Caco-2 (cell line): ENCODE measurements at regions of chr1 and their contacts with region 1.

Region 1: GRCh38 chr1:234499119-234499942 is 20.4 kb upstream of the TARBP1 start:
- DNase-seq: peak; percentile 81 to 91
- H3K4me3 ChIP-seq: no peak overlapping the region
- H3K4me3 Mint-ChIP-seq: no peak overlapping the region
- H3K27ac Mint-ChIP-seq: peak overlapping the region; percentile 96
- H3K4me1 ChIP-seq: peaks cover 11% of the 10 kb centered on the region
- H3K4me1 Mint-ChIP-seq: peaks cover 18% of the 10 kb centered on the region
- H3K27me3 ChIP-seq: no peaks in the 10 kb centered on the region
- H3K27me3 Mint-ChIP-seq: no peaks in the 10 kb centered on the region
- CTCF ChIP-seq: peak; percentile 96

Region 2: DNA sequence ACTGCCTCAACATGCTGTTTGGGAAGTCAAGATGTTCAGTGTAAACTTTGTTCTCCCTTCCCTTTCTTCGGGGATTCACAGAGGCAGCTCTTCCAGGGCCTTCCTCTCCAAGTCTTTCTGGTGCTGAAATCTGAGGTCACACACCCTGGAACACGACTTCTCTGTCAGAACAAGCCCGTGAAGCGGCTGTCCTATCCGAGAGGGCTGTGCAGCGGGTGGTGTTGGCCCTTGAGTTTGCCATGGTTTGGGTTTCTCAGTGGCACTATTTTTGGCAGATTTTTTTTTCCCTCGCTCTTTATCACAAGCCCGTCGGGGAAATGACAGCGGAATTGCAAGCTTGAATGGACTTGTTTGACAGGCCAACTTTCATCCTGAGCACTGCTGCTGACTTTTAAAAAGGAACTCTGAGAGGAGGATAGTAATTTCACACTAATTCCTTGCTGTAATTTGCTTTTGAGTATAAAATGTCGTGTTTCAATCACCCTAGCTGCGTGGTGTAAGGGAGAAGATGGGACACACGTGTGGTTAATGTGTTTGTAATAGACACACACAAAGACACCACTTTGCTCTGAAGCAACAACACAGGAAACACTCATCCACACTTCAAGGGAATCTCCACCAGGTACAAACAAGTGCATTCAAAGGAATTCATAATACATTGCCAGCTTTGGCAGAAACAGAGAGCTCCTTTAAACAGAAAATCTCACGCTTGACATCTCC is 39.8 kb after region 1 on chr1:
- CTCF ChIA-PET with region 1: interaction called, 16 read pairs
- POLR2A ChIA-PET with region 1: interaction called, 4 read pairs
- intact Hi-C with region 1: loop called (anchors 1 kb)
- DNase-seq: no peak
- H3K4me3 ChIP-seq: no peak overlapping the region
- H3K4me3 Mint-ChIP-seq: no peak overlapping the region
- H3K27ac Mint-ChIP-seq: peak overlapping the region; percentile 83
- H3K4me1 ChIP-seq: peaks cover 55% of the 10 kb centered on the region
- H3K4me1 Mint-ChIP-seq: peaks cover 36% of the 10 kb centered on the region
- H3K27me3 ChIP-seq: no peaks in the 10 kb centered on the region
- H3K27me3 Mint-ChIP-seq: no peaks in the 10 kb centered on the region
- CTCF ChIP-seq: no peak

Region 3: DNA sequence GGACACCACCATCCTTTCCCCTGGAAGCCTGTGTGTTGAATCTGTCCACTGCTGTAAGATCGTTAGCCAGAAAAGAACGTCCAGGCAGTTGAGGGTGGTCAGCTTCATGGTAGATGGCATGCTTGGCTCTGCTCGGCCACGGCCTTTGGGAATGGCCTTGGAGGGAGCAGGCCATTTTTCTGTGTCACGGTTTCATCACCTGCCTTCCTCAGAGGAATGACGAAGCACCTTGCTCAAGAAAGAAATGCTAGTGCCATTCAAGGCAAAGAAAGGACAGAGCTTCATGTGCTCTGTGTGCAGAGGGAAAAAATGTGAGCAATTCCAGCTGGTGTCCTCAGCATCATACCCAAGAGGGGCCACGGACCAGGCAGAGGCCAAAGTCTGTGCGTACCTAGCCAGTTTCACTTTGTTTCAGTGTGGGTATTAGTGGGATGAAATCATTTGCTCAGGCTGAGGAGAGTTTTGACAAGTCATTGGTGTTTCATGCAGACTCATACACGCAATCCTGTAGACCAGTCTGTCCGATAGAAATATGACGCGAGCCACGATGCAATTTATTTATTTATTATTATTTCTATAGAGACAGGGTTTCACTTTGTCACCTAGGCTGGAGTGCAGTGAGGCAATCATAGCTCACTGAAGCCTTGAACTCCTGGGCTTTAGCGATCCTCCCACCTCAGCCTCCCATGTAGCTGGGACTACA is 46.7 kb after region 1 on chr1:
- CTCF ChIA-PET with region 1: interaction called, 5 read pairs
- POLR2A ChIA-PET with region 1: no interaction called
- intact Hi-C with region 1: loop called (anchors 1 kb)
- DNase-seq: peak; percentile 88 to 90
- H3K4me3 ChIP-seq: no peak overlapping the region
- H3K4me3 Mint-ChIP-seq: no peak overlapping the region
- H3K27ac Mint-ChIP-seq: peak overlapping the region; percentile 48
- H3K4me1 ChIP-seq: peaks cover 39% of the 10 kb centered on the region
- H3K4me1 Mint-ChIP-seq: peaks cover 32% of the 10 kb centered on the region
- H3K27me3 ChIP-seq: no peaks in the 10 kb centered on the region
- H3K27me3 Mint-ChIP-seq: no peaks in the 10 kb centered on the region
- CTCF ChIP-seq: no peak

Region 4: DNA sequence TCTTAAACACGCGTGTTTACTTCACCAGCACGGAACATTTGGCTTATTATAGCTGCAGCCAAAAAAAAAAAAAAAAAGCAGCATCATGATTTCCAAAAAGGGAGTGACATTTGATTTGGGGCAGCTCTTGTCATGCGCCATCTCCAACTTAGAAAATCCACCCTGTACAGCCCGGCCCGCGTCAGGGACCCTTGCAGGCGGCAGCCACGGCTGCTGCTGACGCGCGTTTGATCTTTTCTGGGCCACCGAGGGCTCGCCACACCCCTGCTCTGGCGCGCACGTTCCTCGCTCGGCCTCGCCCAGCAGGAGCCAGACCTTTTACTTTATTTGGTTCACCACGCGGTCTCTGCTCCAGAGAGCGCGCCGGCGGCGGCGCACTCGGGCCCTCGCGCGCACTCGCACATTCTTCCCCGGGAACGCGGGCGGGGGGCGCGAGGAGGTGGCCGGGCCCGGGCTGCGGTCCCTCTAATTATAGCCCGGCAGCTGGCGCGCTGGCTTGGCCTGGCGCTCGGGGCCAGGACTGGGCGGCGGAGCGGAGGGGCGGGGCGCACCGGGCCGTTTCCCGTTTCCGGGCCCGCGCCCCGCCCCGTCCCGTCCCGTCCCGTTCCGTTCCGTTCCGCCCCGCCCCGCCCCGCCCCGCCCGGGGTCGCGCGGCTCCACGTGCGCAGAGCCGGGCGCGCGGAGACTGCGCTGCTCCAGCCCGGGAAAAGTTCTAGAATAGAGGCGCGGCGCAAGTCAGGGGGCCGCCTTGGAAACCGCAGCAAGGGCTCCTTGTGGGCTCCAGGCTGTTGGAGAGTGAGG is 100.5 kb after region 1 on chr1:
- CTCF ChIA-PET with region 1: interaction called, 15 read pairs
- POLR2A ChIA-PET with region 1: interaction called, 6 read pairs
- intact Hi-C with region 1: loop called (anchors 1 kb)
- DNase-seq: peak; percentile 92 to 93
- H3K4me3 ChIP-seq: peak overlapping the region; percentile 59
- H3K4me3 Mint-ChIP-seq: peak overlapping the region; percentile 89
- H3K27ac Mint-ChIP-seq: peak overlapping the region; percentile 92
- H3K4me1 ChIP-seq: peaks cover 57% of the 10 kb centered on the region
- H3K4me1 Mint-ChIP-seq: peaks cover 23% of the 10 kb centered on the region
- H3K27me3 ChIP-seq: no peaks in the 10 kb centered on the region
- H3K27me3 Mint-ChIP-seq: no peaks in the 10 kb centered on the region
- CTCF ChIP-seq: no peak

Region 5: DNA sequence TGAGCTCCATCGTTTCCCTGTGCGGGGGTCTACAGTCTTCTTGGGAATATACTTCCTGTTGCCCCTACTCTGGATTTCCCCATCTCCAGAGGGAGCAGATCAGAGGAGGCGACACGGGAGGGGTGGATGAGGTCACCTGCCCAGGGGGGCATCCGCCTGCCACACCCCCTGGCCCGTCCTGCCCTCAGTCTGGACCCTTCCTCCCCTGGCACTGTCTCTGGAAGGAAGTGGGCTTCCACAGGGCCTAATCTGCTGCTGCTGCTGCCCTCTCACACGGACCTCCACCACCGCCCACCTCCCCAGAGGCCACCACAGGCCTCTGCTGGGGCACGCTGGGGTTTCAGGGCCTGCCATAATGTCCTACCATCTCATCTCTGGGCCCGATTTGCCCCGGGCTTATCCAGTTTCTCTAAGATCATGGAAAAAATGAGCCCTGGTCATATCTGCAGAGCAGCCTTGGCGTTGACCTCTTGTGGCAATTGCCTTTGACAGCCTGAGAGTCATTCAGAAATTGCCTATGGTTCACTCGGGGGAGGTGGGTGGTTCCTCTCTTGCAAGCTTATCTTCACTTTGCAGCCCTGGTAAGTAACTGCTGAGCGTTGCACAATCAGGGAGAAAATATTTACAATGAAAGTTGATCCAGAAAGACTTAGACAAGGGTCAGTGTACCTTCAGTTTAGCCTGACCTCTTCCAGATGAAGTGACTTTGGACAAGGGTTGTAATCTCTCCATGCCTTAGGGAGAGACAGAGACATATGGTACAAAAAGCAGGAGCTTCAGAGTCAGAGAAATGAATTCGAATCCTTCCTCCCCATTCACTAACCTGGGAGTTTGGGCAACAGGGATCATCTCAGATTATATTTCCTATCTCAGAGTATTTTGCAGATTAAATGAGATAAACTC is 376.9 kb after region 1 on chr1:
- CTCF ChIA-PET with region 1: no interaction called
- POLR2A ChIA-PET with region 1: no interaction called
- intact Hi-C with region 1: loop called (anchors 10 kb)
- DNase-seq: peak; percentile 84 to 87
- H3K4me3 ChIP-seq: no peak overlapping the region
- H3K4me3 Mint-ChIP-seq: no peak overlapping the region
- H3K27ac Mint-ChIP-seq: peak overlapping the region; percentile 58
- H3K4me1 ChIP-seq: peaks cover 44% of the 10 kb centered on the region
- H3K4me1 Mint-ChIP-seq: peaks cover 35% of the 10 kb centered on the region
- H3K27me3 ChIP-seq: no peaks in the 10 kb centered on the region
- H3K27me3 Mint-ChIP-seq: no peaks in the 10 kb centered on the region
- CTCF ChIP-seq: no peak

Region 6: DNA sequence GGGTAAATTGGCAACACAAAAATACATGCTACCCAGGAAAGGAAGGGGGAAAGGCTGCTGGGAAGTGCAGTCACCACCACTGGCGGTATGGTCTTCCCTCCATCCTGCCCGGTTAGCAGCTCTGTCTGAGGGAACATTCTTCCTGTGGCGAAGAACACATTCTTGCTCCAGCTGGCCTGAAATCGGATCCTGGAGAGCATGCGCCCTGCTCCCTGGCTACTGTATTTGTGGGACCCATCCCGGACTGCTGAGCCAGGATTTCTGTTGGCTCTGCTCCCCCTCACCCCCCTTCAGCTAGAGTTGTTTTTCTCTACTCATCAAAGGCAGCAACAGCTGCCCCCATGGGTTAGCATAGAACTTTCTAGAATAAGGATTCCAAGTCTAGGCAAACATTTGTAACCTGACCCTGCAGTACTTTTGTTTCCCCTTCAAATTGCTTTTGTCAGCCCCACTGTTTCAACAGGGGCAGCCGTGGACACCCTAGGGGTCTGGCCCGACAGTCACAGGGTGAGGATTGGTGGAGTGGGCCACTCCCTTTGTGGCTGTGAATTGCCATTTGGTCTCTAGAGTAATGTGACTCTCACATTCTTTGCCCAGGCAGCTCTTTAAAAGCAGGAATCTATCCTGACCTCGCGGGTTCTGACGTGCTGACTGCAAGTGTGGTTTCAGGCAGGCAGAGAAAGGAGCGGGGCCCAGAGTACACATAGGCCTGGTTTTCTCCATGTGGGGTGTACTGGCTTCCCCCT is 471.6 kb after region 1 on chr1:
- CTCF ChIA-PET with region 1: no interaction called
- POLR2A ChIA-PET with region 1: no interaction called
- intact Hi-C with region 1: loop called (anchors 2 kb)
- DNase-seq: peak; percentile 73 to 78
- H3K4me3 ChIP-seq: no peak overlapping the region
- H3K4me3 Mint-ChIP-seq: peak overlapping the region; percentile 72
- H3K27ac Mint-ChIP-seq: peak overlapping the region; percentile 94
- H3K4me1 ChIP-seq: peaks cover 64% of the 10 kb centered on the region
- H3K4me1 Mint-ChIP-seq: peaks cover 60% of the 10 kb centered on the region
- H3K27me3 ChIP-seq: no peaks in the 10 kb centered on the region
- H3K27me3 Mint-ChIP-seq: no peaks in the 10 kb centered on the region
- CTCF ChIP-seq: no peak

Region 7: GRCh38 chr1:235093696-235094592 is 594.6 kb after region 1 on chr1:
- CTCF ChIA-PET with region 1: interaction called, 11 read pairs
- POLR2A ChIA-PET with region 1: no interaction called
- intact Hi-C with region 1: loop called (anchors 1 kb)
- DNase-seq: peak; percentile 68 to 83
- H3K4me3 ChIP-seq: no peak overlapping the region
- H3K4me3 Mint-ChIP-seq: no peak overlapping the region
- H3K27ac Mint-ChIP-seq: no peak overlapping the region
- H3K4me1 ChIP-seq: peaks cover 8% of the 10 kb centered on the region; the same call in 1 of the 2 replicates
- H3K4me1 Mint-ChIP-seq: peaks cover 18% of the 10 kb centered on the region
- H3K27me3 ChIP-seq: no peaks in the 10 kb centered on the region
- H3K27me3 Mint-ChIP-seq: no peaks in the 10 kb centered on the region
- CTCF ChIP-seq: peak; percentile 88 to 92